ENCODE measurements at regions of chr18 and their contacts with region 1.

Region 1: DNA sequence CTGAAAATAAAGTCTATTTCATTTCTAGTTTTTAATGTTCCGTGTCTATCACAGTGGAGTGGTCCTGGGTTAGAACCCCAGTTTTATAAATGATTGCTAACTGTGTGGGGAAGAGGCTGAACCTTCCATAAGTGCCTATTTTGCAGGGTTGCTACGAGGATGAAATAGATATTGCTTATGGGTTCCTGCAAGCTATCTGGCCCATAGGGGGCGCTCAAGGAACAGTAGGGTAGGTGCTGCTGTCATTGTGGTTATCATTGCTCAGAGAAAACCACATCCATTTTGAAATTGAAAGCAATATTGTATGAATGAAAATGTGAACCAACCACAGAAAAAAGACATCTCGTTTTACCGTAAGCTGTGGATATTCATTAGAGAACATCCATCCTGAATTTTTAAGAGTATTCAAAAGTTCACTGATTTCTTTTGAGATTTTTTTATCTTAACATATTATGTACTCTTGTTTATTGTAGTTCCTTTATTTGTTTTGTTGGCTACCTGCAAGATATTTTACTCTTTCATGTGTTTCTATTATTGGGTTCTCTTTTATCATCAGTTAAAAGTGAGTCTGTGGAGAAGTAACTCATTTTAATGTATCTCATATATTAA is 261.6 kb downstream of the NAPG start:
- DNase-seq: peak; percentile 79
- H3K4me3 Mint-ChIP-seq: no peak overlapping the region
- H3K27ac Mint-ChIP-seq: no peak overlapping the region
- H3K4me1 Mint-ChIP-seq: peaks cover 12% of the 10 kb centered on the region
- H3K27me3 Mint-ChIP-seq: peaks cover 49% of the 10 kb centered on the region

Region 2: DNA sequence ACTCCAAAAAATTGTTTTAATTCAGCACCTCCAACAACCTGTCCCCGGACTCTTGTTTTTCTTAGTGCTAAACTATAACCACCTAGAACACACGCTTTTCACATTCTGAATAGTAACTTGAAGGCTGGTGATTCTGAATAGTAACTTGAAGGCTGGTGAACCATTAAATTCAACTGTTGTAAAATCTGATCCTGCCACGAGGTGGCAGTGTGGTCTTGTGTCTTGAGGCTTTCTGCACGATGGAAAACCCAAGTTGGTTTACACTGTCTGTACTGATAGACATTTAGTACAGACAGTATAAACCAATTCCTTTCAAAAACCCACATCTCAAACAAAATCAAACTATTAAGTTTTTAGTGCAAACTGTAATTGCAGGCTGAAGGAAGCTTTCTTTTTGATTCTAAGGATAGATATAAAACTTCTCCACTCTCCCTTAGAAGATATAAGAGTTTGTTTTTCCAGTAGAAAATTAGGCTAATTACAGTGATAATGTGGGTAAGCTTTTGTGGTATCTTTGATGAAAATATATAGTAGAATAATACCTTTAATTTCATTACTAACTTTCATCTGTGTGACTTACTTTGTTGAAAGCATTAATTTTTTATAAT is 816.0 kb before region 1 on chr18:
- intact Hi-C with region 1: loop called (anchors 5 kb)
- DNase-seq: peak; percentile 55
- H3K4me3 Mint-ChIP-seq: no peak overlapping the region
- H3K27ac Mint-ChIP-seq: no peak overlapping the region
- H3K4me1 Mint-ChIP-seq: no peaks in the 10 kb centered on the region
- H3K27me3 Mint-ChIP-seq: peaks cover 16% of the 10 kb centered on the region

Region 3: GRCh38 chr18:10560450-10561045 is 226.8 kb before region 1 on chr18:
- intact Hi-C with region 1: loop called (anchors 1 kb)
- DNase-seq: peak; percentile 33
- H3K4me3 Mint-ChIP-seq: no peak overlapping the region
- H3K27ac Mint-ChIP-seq: no peak overlapping the region
- H3K4me1 Mint-ChIP-seq: no peaks in the 10 kb centered on the region
- H3K27me3 Mint-ChIP-seq: no peaks in the 10 kb centered on the region

Region 4: DNA sequence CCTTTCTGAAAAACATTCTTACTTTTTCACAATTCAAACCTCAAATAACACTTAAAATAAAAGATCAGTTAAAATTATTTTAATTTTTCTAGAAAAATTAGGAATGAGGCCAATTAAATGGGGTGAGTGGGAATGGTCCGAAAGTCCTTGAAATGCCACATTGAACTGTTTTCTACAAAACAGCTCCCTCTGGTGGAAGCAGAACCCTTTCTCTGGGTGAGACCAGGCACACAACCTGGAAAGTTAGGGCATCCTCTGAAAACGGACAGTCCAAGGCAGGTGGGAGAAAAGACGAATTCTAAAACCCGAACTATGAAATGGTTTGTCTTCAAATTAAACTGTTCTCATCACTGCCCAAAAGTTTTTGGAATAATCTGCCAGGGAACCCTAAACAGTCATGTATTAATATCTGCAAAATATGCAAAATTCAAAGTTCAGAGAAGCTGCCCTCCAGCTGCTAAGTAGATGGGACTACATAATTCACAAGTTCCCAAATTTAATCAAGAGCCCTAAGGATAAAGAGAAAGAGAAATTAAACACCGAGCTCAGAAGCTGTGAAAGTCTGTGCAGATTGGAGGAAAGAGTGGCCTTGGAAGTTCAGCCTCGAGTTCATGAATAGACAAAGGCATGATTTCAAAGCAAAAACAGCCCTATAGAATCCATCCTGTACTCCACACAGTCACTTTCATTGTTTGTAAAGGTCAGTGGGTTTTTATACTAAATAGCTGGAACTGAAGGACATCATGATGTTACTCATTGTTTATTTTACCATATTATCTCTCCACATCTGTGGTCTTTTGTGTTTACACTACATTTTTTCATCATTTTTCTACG is 253.6 kb after region 1 on chr18:
- intact Hi-C with region 1: loop called (anchors 1 kb)
- DNase-seq: peak; percentile 3
- H3K4me3 Mint-ChIP-seq: no peak overlapping the region
- H3K27ac Mint-ChIP-seq: no peak overlapping the region
- H3K4me1 Mint-ChIP-seq: no peaks in the 10 kb centered on the region
- H3K27me3 Mint-ChIP-seq: peaks cover 13% of the 10 kb centered on the region

Region 5: DNA sequence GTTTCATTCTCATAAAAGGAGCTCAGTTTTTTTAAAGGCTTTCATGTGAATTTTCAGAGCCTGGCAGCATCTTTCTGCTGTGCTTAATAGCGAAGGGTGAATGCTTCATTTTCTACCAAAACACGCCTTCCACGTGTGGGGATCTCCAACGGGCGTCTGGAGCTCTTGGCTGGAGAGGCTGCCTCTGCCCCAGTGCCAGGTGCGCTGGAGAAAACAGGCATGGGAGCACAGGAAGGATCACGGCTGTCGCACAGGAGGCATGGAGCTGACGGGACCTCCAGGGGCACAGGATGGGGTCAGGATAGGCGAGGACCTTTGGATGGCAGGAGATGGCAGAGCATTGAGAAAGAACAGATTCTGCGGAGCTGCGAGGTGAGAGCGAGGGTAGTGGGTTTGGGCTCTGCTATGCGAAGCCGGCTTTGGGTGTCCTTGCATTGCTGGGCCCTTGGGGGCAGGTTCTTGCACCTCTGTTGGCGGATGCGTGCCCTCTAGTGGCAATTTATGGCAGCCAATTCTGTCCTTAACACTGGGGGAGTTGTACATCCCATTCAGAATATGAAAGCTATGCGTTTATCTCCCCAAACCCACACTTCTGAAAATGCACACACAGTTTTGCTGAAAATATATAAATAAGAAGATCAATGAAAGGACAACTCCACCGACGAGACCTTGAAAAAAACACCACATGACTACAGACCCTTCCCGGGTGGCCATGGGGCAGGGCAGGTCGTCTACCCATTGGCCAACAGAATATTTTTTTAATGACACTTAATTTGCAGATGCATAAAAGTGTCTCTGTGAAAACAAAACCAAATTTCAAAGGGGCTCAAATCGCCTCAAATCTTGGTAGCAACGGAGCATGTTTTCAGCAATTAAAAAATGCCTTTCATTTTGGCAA is 731.6 kb after region 1 on chr18:
- intact Hi-C with region 1: loop called (anchors 1 kb)
- DNase-seq: peak; percentile 6
- H3K4me3 Mint-ChIP-seq: no peak overlapping the region
- H3K27ac Mint-ChIP-seq: no peak overlapping the region
- H3K4me1 Mint-ChIP-seq: no peaks in the 10 kb centered on the region
- H3K27me3 Mint-ChIP-seq: peaks cover 6% of the 10 kb centered on the region

Region 6: GRCh38 chr18:11908182-11909060 is 1121.0 kb after region 1 on chr18 and contains the start of gene MPPE1:
- intact Hi-C with region 1: loop called (anchors 2 kb)
- DNase-seq: peak; percentile 87
- H3K4me3 Mint-ChIP-seq: peak within 1 kb of the TSS; percentile 94
- H3K27ac Mint-ChIP-seq: peak within 1 kb of the TSS; percentile 93
- H3K4me1 Mint-ChIP-seq: peaks cover 32% of the 10 kb centered on the region
- H3K27me3 Mint-ChIP-seq: no peaks in the 10 kb centered on the region
- total RNA-seq, gene MPPE1: 45.8 and 47.4 TPM in 2 replicates

Measured in activated T-helper 1 cell treated with anti-CD3 and anti-CD28 coated beads, Interleukin-12 subunit alpha, Interleukin-12 subunit beta, Interleukin-2, Interleukin-4 antibody, amounts not matched to agents 30 ng/mL and 10 ng/mL and 1 ng/mL, durations not matched to agents 14 hours and 24 hours and 36 hours (primary cell).